Thyroid gland (tissue), 4 donors: ENCODE measurements at regions of chr1 and their contacts with region 1.

Region 1: DNA sequence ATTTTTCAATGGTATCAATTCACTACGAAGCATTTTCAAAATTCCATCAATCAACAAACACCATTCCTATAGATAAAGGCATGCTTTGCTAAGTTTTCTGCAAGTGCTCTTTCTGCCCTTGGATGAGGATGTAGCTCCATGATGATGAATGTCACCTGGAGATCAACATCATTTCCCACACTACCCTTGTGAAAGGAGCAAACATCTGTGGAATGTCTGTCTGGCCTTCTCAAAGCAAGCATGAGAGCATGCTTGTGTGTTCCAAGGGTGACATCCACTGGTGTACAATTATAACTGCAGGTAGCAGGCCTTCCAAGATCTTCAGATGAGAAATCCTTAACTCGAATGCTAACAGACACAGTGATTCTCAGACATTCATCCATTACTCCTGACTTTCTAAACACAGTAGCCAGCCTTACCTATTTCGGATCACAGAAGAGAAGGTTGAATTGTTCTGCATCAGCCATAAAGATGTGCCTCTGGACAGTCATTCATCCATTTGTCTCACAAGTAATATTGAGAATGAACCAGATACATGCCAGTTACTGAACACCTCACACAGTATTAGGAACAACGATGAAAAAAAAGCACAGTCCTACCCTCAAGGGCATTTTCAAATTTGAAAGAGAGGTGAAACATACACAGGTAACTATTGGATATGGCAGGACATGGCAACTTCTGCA is 162.4 kb downstream of the TPR start:
- DNase-seq: peak; percentile 45 to 55
- H3K4me3 ChIP-seq: no peak overlapping the region
- H3K27ac ChIP-seq: no peak overlapping the region
- H3K4me1 ChIP-seq: no peaks in the 10 kb centered on the region
- H3K27me3 ChIP-seq: no peaks in the 10 kb centered on the region
- CTCF ChIP-seq: peak; percentile 69 to 99 (median 90)
- POLR2A ChIP-seq: no peak

Region 2: GRCh38 chr1:185720633-185721272 is 491.9 kb before region 1 on chr1:
- intact Hi-C with region 1: loop called (anchors 10 kb)
- DNase-seq: no peak
- H3K4me3 ChIP-seq: no peak overlapping the region
- H3K27ac ChIP-seq: no peak overlapping the region
- H3K4me1 ChIP-seq: no peaks in the 10 kb centered on the region
- H3K27me3 ChIP-seq: no peaks in the 10 kb centered on the region
- CTCF ChIP-seq: peak in 4 of 6 experiments; percentile 18 to 61 (median 58)
- POLR2A ChIP-seq: no peak

Region 3: GRCh38 chr1:185813401-185813979 is 399.2 kb before region 1 on chr1:
- intact Hi-C with region 1: loop called (anchors 10 kb)
- DNase-seq: peak in 1 of 2 donors; percentile 11
- H3K4me3 ChIP-seq: no peak overlapping the region
- H3K27ac ChIP-seq: no peak overlapping the region
- H3K4me1 ChIP-seq: no peaks in the 10 kb centered on the region
- H3K27me3 ChIP-seq: no peaks in the 10 kb centered on the region
- CTCF ChIP-seq: peak in 4 of 6 experiments; percentile 25 to 59 (median 56)
- POLR2A ChIP-seq: no peak

Region 4: DNA sequence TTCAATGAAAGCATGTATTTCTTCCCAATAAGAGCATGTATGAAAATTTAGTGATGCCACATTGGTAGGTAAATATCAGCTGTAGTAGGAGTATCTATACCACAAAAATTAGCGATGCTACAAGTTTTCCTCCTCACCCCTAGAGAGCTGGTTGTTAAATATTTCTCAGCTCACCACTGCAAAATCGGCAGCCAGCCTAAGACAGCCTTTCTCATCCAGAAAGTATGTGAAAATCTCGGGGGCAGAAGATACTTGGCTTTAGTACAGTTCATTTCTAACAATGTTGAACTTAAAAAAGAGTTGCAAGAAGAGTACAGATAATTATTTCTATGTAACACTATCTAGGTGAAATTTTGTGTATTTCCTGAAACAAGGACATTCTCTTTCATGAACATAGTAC is 73.0 kb before region 1 on chr1:
- intact Hi-C with region 1: no loop called
- DNase-seq: no peak
- H3K4me3 ChIP-seq: no peak overlapping the region
- H3K27ac ChIP-seq: no peak overlapping the region
- H3K4me1 ChIP-seq: no peaks in the 10 kb centered on the region
- H3K27me3 ChIP-seq: no peaks in the 10 kb centered on the region
- CTCF ChIP-seq: no peak
- POLR2A ChIP-seq: no peak

Region 5: GRCh38 chr1:186155594-186155993 is 57.1 kb before region 1 on chr1:
- intact Hi-C with region 1: loop called (anchors 5 kb)
- DNase-seq: peak in 1 of 2 donors; percentile 16
- H3K4me3 ChIP-seq: no peak overlapping the region
- H3K27ac ChIP-seq: no peak overlapping the region
- H3K4me1 ChIP-seq: no peaks in the 10 kb centered on the region
- H3K27me3 ChIP-seq: no peaks in the 10 kb centered on the region
- CTCF ChIP-seq: peak in 5 of 6 experiments; percentile 32 to 74 (median 61)
- POLR2A ChIP-seq: no peak

Region 6: DNA sequence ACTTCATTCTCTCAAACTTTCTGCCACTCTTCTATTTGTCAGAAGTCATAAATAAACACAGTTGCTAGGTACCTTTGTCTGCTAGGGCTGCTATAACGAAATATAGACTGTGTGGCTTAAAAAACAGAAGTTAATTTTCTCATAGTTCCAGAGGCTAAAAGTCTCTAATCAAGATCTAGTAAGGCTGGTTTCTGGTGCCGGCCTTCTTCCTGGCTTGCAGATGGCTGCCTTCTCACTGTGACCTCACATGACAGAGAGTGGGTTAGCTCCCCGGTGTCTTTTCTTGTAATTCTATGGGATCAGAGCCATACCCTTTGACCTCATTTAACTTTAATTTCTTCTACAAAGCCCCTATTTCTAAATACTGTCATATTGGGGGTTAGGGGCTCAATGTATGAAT is 242.3 kb after region 1 on chr1:
- intact Hi-C with region 1: no loop called
- DNase-seq: no peak
- H3K4me3 ChIP-seq: no peak overlapping the region
- H3K27ac ChIP-seq: no peak overlapping the region
- H3K4me1 ChIP-seq: no peaks in the 10 kb centered on the region
- H3K27me3 ChIP-seq: no peaks in the 10 kb centered on the region
- CTCF ChIP-seq: no peak
- POLR2A ChIP-seq: no peak